ENCODE measurements at regions of chr12 and their contacts with region 1.

Region 1: DNA sequence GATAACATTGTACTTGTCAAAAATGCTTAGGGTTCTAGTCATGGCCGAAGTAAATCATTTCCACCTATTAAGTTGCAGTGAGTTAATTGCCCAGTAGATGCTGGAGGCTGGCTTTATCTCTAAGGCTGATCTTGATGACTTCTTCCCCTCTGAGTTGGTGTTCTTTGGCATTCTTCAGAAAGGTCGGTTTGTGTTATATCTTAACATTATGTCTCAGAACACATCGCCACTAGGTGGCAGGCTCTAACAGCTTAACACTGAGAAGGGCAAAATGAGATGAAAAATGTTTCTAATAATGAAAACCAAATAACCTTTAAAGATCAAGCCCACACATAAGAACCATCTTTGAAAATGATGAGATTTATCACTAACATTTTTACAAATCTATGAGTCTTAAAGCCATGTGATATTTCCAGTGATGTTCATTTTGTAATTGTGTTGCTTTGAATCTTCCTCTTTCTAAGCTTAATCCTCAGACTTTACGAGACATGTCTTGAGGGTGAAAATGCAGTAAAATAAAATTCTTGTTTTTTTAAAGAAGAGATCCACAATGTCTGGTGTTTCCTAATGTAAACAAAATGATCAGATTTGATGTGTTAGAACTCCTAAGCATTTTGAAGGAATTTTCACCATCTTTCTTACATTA is 28.6 kb downstream of the SUDS3 start:
- DNase-seq: peak; percentile 77
- H3K4me3 ChIP-seq: no peak overlapping the region
- H3K27ac ChIP-seq: no peak overlapping the region
- H3K4me1 ChIP-seq: no peaks in the 10 kb centered on the region
- H3K27me3 ChIP-seq: no peaks in the 10 kb centered on the region
- CTCF ChIP-seq: peak; percentile 55 to 69
- POLR2A ChIP-seq: no peak

Region 2: DNA sequence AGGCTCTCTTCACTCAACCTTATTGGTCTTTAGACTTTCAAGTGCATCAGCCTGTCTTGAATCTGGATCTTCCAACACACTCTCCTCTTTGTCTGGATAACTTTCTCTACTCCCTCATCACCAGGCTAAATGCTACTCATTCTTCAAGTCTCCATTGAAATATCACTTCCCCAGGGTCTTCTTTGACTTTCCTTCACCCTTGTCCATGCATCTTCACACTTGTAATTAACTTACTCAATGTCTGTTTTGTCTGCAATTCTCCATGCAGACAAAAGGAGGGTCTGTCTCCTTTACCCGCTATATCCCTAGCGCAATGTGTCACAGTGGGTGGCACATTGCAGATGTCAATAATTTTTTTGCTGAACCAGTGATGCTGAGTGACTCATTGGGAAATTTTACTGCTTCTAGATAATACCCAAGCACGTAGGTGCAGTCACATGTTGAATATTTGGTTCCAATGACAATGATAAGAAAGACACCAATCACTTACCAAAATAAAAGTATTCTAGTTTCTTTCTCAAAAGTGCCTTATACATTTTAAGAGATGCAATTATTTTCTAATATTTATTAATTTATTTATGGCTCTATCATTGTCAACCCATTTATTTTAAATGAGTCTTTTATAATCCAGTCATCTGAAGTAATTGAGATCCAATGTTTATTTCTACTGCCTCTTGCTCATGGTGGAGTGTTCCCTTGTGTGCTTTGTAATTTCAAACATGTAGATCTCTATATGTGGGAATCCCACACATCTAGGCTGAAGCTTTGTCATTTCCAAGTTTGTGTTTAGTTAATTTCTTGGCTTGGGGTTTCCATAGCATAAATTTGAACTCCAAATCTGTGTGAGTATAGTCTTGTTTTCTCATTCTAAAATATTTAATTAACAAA is 410.2 kb before region 1 on chr12:
- CTCF ChIA-PET with region 1: no interaction called
- POLR2A ChIA-PET with region 1: no interaction called
- dilution Hi-C with region 1: no loop called
- intact Hi-C with region 1: no loop called
- DNase-seq: no peak
- H3K4me3 ChIP-seq: no peak overlapping the region
- H3K27ac ChIP-seq: no peak overlapping the region
- H3K4me1 ChIP-seq: no peaks in the 10 kb centered on the region
- H3K27me3 ChIP-seq: no peaks in the 10 kb centered on the region
- CTCF ChIP-seq: no peak
- POLR2A ChIP-seq: no peak

Region 3: GRCh38 chr12:118853634-118854033 is 448.6 kb after region 1 on chr12:
- CTCF ChIA-PET with region 1: no interaction called
- POLR2A ChIA-PET with region 1: no interaction called
- dilution Hi-C with region 1: no loop called
- intact Hi-C with region 1: loop called (anchors 2 kb)
- DNase-seq: no peak
- H3K4me3 ChIP-seq: no peak overlapping the region
- H3K27ac ChIP-seq: no peak overlapping the region
- H3K4me1 ChIP-seq: no peaks in the 10 kb centered on the region
- H3K27me3 ChIP-seq: no peaks in the 10 kb centered on the region
- CTCF ChIP-seq: no peak
- POLR2A ChIP-seq: no peak

Region 4: DNA sequence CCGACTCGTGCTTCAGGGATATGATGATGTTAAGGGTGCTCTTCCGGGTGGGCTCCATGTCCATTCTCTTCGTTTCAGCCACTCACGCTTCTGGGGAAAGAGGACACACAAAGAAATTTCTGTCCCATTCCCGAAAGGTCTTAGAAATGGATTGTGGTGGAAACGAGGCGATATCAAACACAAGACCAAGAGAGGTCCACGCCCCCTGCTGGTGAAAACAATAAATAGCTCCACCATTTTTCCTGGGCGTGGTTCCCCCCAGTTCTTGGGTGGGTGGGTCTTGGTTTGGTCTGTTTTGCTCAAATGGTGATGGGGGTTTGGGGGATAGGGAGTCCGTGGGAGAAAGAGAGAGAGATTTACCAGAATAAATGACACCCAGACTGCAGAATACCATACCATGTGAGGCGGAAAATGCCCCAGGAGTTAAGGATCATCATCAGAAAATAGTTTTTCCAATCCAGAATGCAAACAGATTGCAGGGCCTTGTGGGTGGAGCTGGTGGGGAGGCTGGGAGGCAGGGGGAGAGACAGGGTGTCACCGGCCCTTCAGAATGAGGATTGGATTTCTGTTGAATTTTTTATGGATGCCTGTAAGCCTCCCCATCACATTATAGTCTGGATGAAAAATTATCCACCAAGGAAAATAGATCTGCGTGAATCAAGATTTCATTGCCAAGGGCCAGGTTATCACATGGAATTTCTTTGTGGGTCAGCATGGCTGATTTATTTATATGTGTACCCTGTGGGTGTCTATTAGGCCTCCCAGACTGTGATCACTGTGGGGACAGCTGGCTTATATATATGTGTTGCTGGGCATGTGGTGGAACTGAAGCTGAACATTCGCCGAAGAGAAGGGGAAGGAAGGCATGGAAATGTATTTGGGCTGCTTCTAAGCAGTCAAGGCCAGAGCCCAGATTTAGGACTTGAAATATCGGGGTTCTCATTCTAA is 632.2 kb after region 1 on chr12:
- CTCF ChIA-PET with region 1: interaction called, 64 read pairs
- POLR2A ChIA-PET with region 1: no interaction called
- dilution Hi-C with region 1: no loop called
- intact Hi-C with region 1: no loop called
- DNase-seq: no peak
- H3K4me3 ChIP-seq: no peak overlapping the region
- H3K27ac ChIP-seq: no peak overlapping the region
- H3K4me1 ChIP-seq: no peaks in the 10 kb centered on the region
- H3K27me3 ChIP-seq: no peaks in the 10 kb centered on the region
- CTCF ChIP-seq: peak; percentile 34 to 40
- POLR2A ChIP-seq: no peak

Region 5: DNA sequence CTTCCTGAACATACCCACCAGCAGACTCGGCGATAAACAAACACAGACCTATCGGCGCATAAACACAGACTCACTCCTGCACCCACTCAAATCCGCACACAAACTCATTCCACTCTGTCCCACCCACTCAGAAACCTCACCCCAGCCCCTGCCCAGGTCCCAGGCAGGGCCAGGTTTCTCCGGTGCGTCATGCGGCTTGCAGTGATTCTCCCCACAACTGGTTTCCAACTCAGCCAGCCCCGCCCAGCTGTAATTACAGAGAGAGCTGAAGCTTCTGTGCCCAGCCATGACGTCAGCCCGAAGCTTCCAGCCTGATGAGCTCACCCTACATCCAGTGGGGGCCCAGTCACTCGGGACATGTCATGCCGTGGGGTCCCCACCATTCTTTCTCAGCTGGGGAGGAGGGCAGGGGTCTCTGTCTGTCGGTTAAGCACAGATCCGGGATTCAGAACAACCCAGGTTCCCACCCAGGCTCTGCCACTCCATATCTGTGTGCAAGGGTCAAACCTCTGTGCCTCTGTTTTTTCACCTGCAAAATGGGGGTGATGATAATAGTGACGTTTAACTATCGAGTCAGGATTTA is 771.4 kb after region 1 on chr12:
- CTCF ChIA-PET with region 1: interaction called, 3 read pairs
- POLR2A ChIA-PET with region 1: no interaction called
- dilution Hi-C with region 1: no loop called
- intact Hi-C with region 1: loop called (anchors 5 kb)
- DNase-seq: peak; percentile 69
- H3K4me3 ChIP-seq: peak overlapping the region in 1 of 3 experiments; percentile 15
- H3K27ac ChIP-seq: no peak overlapping the region
- H3K4me1 ChIP-seq: peaks cover 29% of the 10 kb centered on the region
- H3K27me3 ChIP-seq: no peaks in the 10 kb centered on the region
- CTCF ChIP-seq: no peak
- POLR2A ChIP-seq: no peak

Region 6: DNA sequence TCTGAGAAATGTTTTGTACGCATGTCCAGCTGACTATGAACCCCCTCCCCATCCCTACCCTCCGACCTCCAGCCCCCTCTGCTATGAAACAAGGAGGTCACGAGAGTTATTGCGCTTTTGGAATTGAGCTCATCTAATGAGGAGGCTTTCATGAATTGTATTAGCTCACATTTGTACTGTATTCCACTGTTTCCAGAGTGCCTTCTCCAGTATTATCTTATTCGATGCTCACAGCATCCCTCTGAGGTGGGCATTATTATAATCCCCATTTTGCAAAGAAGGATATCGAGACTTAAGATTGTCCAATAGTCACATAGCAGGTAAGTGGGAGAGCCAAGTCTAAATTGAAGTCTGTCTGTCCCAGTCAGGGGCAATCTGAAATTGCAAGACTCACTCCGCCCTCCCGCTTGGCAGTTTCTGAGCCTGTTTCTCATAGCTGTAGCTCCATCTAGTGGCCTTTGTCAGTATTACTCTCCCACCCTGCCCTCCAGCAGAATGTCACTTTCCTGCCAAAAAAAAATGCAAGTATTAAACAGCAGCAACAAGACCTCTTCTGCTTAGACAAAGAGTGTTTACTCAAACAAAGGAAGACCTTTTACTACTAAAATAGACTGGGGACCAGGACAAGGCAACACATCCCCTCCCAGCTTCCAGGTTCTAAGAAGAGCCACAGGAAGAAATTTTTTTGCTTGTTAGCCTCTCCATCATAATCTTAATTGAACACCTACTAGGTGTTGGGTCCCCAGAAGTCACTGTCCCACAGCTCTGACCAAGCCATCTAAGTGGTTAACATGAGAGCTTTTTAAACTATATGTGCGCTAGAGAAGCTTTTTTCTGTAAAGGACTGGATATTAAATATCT is 1140.0 kb after region 1 on chr12:
- CTCF ChIA-PET with region 1: interaction called, 19 read pairs
- POLR2A ChIA-PET with region 1: no interaction called
- dilution Hi-C with region 1: no loop called
- intact Hi-C with region 1: loop called (anchors 1 kb)
- DNase-seq: peak; percentile 76
- H3K4me3 ChIP-seq: no peak overlapping the region
- H3K27ac ChIP-seq: no peak overlapping the region
- H3K4me1 ChIP-seq: no peaks in the 10 kb centered on the region
- H3K27me3 ChIP-seq: no peaks in the 10 kb centered on the region
- CTCF ChIP-seq: peak; percentile 63 to 76
- POLR2A ChIP-seq: no peak